Esophagus muscularis mucosa (tissue), 4 donors: ENCODE measurements at regions of chr17 and their contacts with region 1.

Region 1: DNA sequence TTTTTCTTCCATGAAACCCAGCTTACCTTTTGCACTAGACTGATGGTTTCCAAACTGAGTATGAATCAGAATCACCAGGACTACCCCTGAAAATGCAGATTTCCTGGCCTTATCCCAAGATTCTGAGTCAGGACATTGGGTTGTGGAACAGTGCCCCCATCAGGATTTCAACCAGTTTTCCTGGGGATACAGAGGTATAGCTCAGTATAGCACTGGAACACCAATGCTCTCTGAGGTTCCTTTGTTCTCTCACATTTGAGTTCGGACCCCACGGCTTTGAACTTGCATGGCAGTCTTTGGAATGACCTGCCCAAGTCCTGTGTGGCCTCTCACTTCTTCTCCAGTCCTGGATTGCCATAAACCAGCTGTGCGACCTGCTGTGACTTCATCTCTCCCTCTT is 12.8 kb upstream of the CCL8 start:
- DNase-seq: peak; percentile 89
- H3K4me3 ChIP-seq: no peak overlapping the region
- H3K27ac ChIP-seq: no peak overlapping the region
- H3K4me1 ChIP-seq: peaks cover 22 to 31% (median 24%) of the 10 kb centered on the region in 4 donors
- H3K27me3 ChIP-seq: no peaks in the 10 kb centered on the region
- CTCF ChIP-seq: peak; percentile 47 to 71 (median 56)
- EP300 ChIP-seq: no peak
- POLR2A ChIP-seq: no peak

Region 2: GRCh38 chr17:34361478-34362061 is 55.1 kb after region 1 on chr17:
- intact Hi-C with region 1: loop called (anchors 1 kb)
- DNase-seq: peak; percentile 95
- H3K4me3 ChIP-seq: no peak overlapping the region
- H3K27ac ChIP-seq: no peak overlapping the region
- H3K4me1 ChIP-seq: peaks cover 0 to 8% (median 2%) of the 10 kb centered on the region in 4 donors
- H3K27me3 ChIP-seq: peaks cover 0 to 29% (median 0%) of the 10 kb centered on the region in 4 donors
- CTCF ChIP-seq: peak in 2 of 3 experiments; percentile 99 to 100
- EP300 ChIP-seq: no peak
- POLR2A ChIP-seq: no peak

Region 3: DNA sequence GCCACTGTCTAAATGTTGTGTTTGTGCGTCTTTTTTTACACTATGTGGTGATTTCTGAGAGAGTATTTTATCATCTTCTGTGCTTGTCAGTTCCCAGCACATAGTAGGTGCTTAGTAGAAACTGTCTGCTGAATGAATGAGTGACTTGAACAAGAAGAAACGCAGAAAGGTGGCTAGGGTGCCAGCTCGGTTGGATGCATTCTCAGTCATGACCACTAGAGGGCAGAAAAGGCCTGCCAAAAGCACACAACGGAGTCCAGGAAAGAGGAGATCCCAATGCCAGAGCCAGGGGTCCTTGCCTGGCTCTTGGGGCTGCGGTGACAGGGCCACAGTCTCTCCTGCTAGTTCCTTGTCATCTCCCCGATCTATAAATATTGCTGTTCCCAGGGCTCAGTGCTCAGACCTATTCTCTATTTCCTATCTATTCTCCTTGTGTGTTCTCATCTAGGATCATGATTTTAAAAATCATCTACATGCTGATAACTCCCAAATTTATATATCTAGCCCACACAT is 113.8 kb after region 1 on chr17:
- intact Hi-C with region 1: no loop called
- DNase-seq: no peak
- H3K4me3 ChIP-seq: no peak overlapping the region
- H3K27ac ChIP-seq: no peak overlapping the region
- H3K4me1 ChIP-seq: no peaks in the 10 kb centered on the region
- H3K27me3 ChIP-seq: peaks cover 0 to 76% (median 8%) of the 10 kb centered on the region in 4 donors
- CTCF ChIP-seq: peak in 2 of 3 experiments; percentile 89 to 93
- EP300 ChIP-seq: no peak
- POLR2A ChIP-seq: no peak

Region 4: GRCh38 chr17:34665819-34666763 is 359.6 kb after region 1 on chr17:
- intact Hi-C with region 1: no loop called
- DNase-seq: no peak
- H3K4me3 ChIP-seq: no peak overlapping the region
- H3K27ac ChIP-seq: no peak overlapping the region
- H3K4me1 ChIP-seq: no peaks in the 10 kb centered on the region
- H3K27me3 ChIP-seq: peaks cover 0 to 71% (median 0%) of the 10 kb centered on the region in 4 donors
- CTCF ChIP-seq: no peak
- EP300 ChIP-seq: no peak
- POLR2A ChIP-seq: no peak